Right ventricle myocardium superior (tissue), 1 donor: ENCODE measurements at regions of chr3 and their contacts with region 1.

Region 1: GRCh38 chr3:102089904-102090492 is 240.7 kb downstream of the NFKBIZ start:
- DNase-seq: no peak
- ATAC-seq: peak; percentile 68

Region 2: GRCh38 chr3:101685870-101686412 is 404.1 kb before region 1 on chr3:
- intact Hi-C with region 1: no loop called
- DNase-seq: no peak
- ATAC-seq: peak; percentile 5

Region 3: GRCh38 chr3:101803173-101803782 is 286.7 kb before region 1 on chr3:
- intact Hi-C with region 1: loop called (anchors 10 kb)
- DNase-seq: no peak
- ATAC-seq: peak; percentile 95

Region 4: GRCh38 chr3:102018551-102018950 is 71.4 kb before region 1 on chr3:
- intact Hi-C with region 1: no loop called
- DNase-seq: no peak
- ATAC-seq: no peak

Region 5: DNA sequence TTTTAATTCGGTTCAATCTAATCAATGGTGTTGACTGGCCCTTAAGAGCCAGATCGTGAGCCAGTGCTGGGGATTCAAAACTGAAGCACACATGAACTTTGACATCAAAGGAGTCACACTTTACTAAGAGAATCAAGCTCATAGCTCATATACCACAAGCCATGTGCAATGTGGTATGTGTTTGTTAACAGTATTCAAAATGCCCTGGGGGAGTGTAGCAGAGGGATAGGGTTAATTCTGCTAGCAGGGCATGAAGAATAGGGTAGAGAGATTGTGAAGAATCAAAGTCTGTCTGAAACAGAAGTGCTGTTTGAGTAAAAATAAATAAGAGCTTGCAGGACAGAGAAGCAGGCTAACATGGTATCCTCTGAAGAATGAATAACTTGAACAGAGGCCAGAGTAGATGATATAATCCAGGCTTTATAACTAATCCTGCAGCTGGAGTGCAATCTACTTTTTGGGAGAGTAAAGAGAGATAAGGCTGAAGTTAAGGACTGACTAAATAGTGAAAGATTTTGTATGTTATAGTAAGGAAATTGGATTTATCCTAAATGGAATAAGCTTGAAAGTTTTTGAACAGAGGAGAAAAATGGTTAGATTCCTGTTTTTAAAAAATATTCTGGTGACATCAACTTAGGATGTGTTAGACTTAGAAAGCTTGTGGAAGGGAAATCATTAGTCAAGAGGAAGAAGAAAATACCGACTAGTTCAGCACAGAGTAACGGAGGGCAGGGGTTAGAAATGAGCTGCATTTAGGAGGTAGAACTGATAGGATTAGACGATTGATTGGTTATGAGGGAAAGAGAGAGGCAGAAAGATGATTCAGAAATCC is 51.3 kb after region 1 on chr3:
- intact Hi-C with region 1: no loop called
- DNase-seq: no peak
- ATAC-seq: peak; percentile 81

Region 6: DNA sequence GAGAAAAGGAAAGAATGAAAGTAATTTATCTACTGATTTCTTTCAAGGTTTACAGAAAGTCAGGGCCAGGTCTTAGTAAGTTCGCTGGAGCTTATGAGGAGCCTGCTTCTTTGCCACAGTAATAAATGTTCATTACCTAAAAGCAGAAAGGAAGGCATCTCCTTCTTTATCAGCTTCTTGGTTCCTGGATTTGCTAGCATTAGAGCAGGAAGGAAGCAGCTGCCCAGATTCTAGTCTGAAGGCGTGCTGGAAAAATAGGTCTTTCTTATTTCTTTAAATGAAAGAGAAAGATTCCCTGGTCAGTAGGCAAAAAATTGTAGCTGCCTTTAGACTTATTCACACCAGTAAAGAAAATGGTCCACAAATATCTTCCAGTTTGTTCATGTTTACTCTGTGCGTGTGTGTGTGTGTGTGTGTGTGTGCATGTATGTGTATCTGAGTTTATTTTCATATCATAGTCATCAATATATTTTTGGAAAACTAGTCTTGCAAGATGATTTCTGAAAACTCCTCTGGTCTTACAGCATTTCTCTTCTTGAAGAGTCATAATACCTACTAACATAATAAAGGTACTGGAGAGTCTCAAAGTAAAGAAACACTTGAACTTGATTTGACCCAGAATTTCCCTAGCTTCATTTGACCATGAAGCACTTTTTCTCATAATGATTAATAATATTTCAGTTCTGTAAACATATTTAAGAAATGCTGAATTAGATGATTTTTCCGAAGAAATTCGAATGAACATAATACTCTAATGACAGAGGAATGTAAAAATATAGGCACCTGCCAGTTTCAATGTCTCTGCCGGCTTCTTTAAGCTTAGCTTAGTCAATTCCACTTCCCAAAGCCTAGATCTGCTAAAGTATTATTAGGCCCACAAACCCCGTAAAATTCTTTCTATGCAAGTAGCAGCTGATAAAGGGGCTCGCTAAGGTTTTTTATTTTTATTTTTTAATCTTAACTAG is 89.6 kb after region 1 on chr3:
- intact Hi-C with region 1: no loop called
- DNase-seq: no peak
- ATAC-seq: no peak